AG04449 (cell line): ENCODE measurements at regions of chr5 and their contacts with region 1.

Region 1: GRCh38 chr5:134577796-134578363 is 52.4 kb downstream of the JADE2 start:
- DNase-seq: no peak
- H3K4me3 ChIP-seq: no peak overlapping the region
- CTCF ChIP-seq: peak; percentile 89

Region 2: DNA sequence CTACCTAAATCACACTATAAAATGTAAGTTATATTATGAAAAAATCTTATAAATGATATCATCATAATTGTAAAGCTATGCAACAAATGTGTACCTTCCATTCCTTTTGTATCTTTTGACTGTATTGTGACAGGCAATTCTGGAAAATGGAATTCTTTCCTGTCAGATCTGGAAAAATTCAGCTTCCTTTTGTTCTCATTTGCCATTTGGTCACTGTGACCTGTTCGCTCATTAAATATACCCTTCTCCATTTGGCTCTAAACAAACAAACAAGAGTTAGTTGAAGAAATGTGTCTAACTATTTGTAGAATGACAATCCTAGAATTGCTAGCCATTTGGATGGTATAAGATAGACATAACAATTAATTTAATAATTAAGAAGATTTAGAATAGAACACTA is 273.6 kb before region 1 on chr5:
- CTCF ChIA-PET with region 1: interaction called, 445 read pairs
- POLR2A ChIA-PET with region 1: no interaction called
- DNase-seq: no peak
- H3K4me3 ChIP-seq: no peak overlapping the region
- CTCF ChIP-seq: no peak

Region 3: GRCh38 chr5:134383980-134384697 is 193.7 kb before region 1 on chr5:
- CTCF ChIA-PET with region 1: interaction called, 23 read pairs
- POLR2A ChIA-PET with region 1: no interaction called
- DNase-seq: no peak
- H3K4me3 ChIP-seq: no peak overlapping the region
- CTCF ChIP-seq: no peak

Region 4: GRCh38 chr5:134394932-134395331 is 182.9 kb before region 1 on chr5:
- CTCF ChIA-PET with region 1: interaction called, 23 read pairs
- POLR2A ChIA-PET with region 1: no interaction called
- DNase-seq: no peak
- H3K4me3 ChIP-seq: no peak overlapping the region
- CTCF ChIP-seq: no peak

Region 5: DNA sequence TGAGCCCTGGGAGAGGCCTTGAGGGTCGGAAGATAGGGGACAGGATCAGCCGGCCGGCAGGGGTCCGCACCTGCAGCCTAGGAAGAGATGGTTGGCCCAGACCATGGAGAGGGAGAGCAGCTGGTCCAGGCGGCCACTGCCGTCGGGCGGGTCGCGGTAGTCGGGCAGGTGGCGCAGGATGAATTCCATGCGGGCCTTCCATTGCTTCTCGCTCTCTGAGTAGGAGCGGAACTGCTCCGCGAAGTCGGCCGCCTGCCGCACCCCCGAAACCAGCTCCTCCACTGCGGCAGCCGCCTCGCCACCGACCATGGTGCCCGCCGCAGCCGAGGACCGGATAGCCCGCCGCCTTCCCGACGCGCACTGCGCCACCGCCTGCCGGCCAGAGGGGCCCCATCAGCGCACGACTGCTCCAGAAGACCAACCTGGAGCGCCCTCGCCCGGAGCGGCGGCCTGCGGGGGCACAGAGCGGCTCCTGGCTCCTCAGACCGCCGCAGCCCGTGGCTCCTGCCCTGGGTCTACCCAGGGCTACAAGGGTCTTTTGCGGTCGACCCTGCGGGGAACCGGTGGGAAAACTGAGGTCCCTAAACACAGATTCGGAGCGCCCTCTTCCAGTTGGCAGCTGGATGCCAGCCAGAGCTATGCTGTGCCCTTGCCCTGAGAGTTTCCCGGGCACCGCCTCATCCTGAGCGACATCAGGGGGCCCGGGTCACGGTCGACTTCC is 166.2 kb before region 1 on chr5 and contains the start of gene CDKN2AIPNL:
- CTCF ChIA-PET with region 1: interaction called, 27 read pairs
- POLR2A ChIA-PET with region 1: no interaction called
- DNase-seq: peak; percentile 16
- H3K4me3 ChIP-seq: peak within 1 kb of the TSS; percentile 92
- CTCF ChIP-seq: peak; percentile 93

Region 6: GRCh38 chr5:134555890-134556311 is 22.0 kb before region 1 on chr5:
- CTCF ChIA-PET with region 1: interaction called, 32 read pairs
- POLR2A ChIA-PET with region 1: no interaction called
- DNase-seq: no peak
- H3K4me3 ChIP-seq: no peak overlapping the region
- CTCF ChIP-seq: peak; percentile 0

Region 7: DNA sequence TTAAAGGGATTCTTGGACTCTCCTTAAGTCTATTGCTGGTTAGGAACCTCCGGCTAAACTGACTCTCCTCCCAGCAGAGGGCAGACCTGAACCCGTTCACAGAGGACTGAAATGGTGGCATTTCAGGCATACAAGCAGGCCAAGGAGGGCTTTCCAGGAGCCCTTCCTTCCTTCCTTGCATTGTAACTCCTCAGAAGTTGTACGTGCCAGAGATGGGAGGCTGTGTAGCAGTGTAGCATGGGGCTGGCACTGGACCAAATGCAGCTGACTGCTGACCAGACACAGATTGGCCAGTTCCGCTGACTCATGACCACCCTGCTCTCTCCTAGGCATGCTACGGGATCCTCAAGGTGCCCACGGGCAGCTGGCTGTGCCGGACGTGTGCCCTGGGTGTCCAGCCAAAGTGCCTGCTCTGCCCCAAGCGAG is 16.0 kb before region 1 on chr5:
- CTCF ChIA-PET with region 1: interaction called, 32 read pairs
- POLR2A ChIA-PET with region 1: no interaction called
- DNase-seq: no peak
- H3K4me3 ChIP-seq: no peak overlapping the region
- CTCF ChIP-seq: peak; percentile 55